WTC11 (cell line): ENCODE measurements at regions of chr18 and their contacts with region 1.

Region 1: DNA sequence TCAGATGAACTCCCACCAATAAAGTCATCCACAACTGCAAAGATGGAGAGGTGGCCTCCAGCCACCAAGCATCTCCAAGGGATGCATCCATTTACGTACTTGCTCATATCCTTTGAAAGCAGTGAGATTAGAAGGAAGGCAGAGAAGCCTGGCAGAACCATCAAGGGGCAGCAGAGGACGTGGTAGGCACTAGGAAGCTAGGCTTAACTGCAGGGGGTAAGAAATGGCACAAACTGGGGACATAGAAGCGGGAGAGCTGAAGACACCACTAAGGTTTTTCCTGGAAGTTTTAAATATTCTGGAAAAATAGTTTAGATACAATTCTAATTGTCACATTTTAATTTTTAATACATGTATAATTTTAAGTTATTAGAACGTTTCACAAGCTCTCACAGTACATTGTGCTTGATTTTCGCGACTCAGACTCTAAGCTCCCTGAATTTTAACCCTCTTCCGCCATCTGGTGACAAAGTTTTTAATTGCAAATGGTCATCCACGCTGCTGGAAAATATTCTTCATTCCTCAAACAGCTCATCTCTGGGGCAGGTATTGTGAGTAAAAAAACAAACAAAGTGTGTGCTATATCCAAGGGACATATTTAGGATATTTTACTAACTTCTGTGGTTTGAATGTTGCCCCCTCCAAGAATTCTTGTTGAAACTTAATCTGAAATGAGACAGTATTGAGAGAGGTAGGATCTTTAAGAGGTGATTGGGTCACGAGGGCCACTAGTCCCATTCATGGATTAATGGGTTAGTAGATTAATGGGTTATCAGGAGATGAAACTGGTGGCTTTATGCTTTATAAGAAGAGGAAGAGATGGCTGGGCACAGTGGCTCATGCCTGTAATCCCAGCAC is 1.6 kb upstream of the PSTPIP2 start:
- DNase-seq: peak; percentile 36
- ATAC-seq: peak; percentile 27
- H3K4me3 Mint-ChIP-seq: peak overlapping the region; percentile 46; the same call in 1 of the 2 replicates
- H3K27ac Mint-ChIP-seq: no peak overlapping the region
- H3K4me1 Mint-ChIP-seq: peaks cover 7% of the 10 kb centered on the region; the same call in 1 of the 2 replicates
- H3K27me3 Mint-ChIP-seq: peaks cover 37% of the 10 kb centered on the region
- CTCF ChIP-seq: peak; percentile 32; the same call in 1 of the 2 replicates

Region 2: DNA sequence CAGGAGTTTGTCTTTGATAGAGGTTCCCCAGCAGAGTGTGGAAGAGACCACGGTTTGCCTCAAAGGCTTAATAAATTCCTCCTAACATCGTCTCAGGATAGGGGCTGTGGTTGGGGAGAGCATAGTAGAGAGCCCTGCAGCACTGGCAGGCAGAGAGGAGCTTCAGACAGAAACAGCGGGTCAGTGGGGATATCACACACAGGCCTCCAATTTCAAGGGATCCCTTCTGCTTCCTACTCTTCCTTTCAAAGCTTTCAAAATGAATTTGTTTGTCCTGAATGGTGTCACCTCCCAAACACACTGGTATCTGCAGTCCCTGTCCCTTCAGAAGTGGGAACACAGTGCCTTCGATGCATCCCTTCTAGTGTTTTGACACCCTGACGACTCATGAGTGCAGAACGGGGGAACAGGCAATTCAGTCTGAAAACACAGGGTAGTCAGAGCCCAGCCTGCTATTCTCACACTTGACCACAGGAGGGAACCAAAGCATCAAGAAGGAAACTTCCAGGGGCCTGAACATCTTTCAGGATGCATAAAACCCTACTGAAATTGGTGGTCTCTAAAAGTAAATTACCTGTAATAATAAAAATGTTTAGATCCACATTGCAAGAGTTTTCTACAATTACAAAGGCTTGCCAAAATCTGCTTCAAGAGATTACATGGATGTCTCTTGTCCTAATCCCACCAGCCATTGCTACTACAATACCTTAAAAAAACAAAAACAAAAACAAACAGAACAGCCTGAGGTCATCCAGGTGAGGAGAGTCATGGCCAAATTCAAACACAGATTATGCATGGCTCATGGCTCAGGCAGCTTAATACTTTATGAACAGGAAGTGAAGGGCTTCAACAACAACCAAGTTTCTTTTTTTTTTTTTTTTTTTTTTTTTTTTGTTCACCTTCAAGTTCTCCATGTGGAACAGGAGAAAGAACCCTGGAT is 408.6 kb before region 1 on chr18:
- CTCF ChIA-PET with region 1: interaction called, 28 read pairs
- POLR2A ChIA-PET with region 1: no interaction called
- DNase-seq: peak; percentile 70
- ATAC-seq: peak; percentile 75
- H3K4me3 Mint-ChIP-seq: no peak overlapping the region
- H3K27ac Mint-ChIP-seq: no peak overlapping the region
- H3K4me1 Mint-ChIP-seq: peaks cover 32% of the 10 kb centered on the region
- H3K27me3 Mint-ChIP-seq: 0 out of 2 replicates have a peak, but pooled peaks cover 2% of the 10 kb centered on the region
- CTCF ChIP-seq: peak; percentile 84

Region 3: GRCh38 chr18:45910405-45911023 is 163.2 kb before region 1 on chr18:
- CTCF ChIA-PET with region 1: interaction called, 16 read pairs
- POLR2A ChIA-PET with region 1: no interaction called
- DNase-seq: peak; percentile 80
- ATAC-seq: peak; percentile 96
- H3K4me3 Mint-ChIP-seq: no peak overlapping the region
- H3K27ac Mint-ChIP-seq: no peak overlapping the region
- H3K4me1 Mint-ChIP-seq: no peaks in the 10 kb centered on the region
- H3K27me3 Mint-ChIP-seq: no peaks in the 10 kb centered on the region
- CTCF ChIP-seq: peak; percentile 65

Region 4: DNA sequence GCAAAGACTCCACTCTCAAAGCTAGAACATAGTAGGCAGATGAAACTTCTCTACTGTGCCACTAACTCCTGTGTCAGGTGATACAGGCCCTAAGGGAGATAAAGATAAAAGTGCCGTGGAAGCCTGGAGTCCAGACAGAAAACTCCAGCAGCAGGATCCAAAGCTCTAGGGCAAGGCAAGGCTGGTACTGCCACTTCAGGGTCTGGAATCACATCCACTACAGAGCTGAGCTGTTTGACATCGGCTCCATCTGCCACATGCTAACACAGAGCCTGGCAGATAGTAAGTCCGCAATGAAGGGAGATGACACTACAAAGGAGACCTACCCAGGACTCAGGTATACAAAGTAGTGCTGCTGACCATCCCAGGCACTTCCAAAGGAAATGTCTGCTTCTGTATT is 141.0 kb before region 1 on chr18:
- CTCF ChIA-PET with region 1: interaction called, 10 read pairs
- POLR2A ChIA-PET with region 1: no interaction called
- DNase-seq: no peak
- ATAC-seq: no peak
- H3K4me3 Mint-ChIP-seq: no peak overlapping the region
- H3K27ac Mint-ChIP-seq: no peak overlapping the region
- H3K4me1 Mint-ChIP-seq: no peaks in the 10 kb centered on the region
- H3K27me3 Mint-ChIP-seq: no peaks in the 10 kb centered on the region
- CTCF ChIP-seq: no peak

Region 5: GRCh38 chr18:45981821-45982220 is 91.9 kb before region 1 on chr18:
- CTCF ChIA-PET with region 1: interaction called, 34 read pairs
- POLR2A ChIA-PET with region 1: no interaction called
- DNase-seq: no peak
- ATAC-seq: no peak
- H3K4me3 Mint-ChIP-seq: no peak overlapping the region
- H3K27ac Mint-ChIP-seq: no peak overlapping the region
- H3K4me1 Mint-ChIP-seq: peaks cover 16% of the 10 kb centered on the region
- H3K27me3 Mint-ChIP-seq: no peaks in the 10 kb centered on the region; the same call in 1 of the 2 replicates
- CTCF ChIP-seq: no peak

Region 6: GRCh38 chr18:46028536-46028891 is 45.2 kb before region 1 on chr18:
- CTCF ChIA-PET with region 1: no interaction called
- POLR2A ChIA-PET with region 1: no interaction called
- DNase-seq: no peak
- ATAC-seq: no peak
- H3K4me3 Mint-ChIP-seq: peak overlapping the region; percentile 64
- H3K27ac Mint-ChIP-seq: no peak overlapping the region
- H3K4me1 Mint-ChIP-seq: peaks cover 6% of the 10 kb centered on the region
- H3K27me3 Mint-ChIP-seq: peaks cover 67% of the 10 kb centered on the region
- CTCF ChIP-seq: no peak

Region 7: DNA sequence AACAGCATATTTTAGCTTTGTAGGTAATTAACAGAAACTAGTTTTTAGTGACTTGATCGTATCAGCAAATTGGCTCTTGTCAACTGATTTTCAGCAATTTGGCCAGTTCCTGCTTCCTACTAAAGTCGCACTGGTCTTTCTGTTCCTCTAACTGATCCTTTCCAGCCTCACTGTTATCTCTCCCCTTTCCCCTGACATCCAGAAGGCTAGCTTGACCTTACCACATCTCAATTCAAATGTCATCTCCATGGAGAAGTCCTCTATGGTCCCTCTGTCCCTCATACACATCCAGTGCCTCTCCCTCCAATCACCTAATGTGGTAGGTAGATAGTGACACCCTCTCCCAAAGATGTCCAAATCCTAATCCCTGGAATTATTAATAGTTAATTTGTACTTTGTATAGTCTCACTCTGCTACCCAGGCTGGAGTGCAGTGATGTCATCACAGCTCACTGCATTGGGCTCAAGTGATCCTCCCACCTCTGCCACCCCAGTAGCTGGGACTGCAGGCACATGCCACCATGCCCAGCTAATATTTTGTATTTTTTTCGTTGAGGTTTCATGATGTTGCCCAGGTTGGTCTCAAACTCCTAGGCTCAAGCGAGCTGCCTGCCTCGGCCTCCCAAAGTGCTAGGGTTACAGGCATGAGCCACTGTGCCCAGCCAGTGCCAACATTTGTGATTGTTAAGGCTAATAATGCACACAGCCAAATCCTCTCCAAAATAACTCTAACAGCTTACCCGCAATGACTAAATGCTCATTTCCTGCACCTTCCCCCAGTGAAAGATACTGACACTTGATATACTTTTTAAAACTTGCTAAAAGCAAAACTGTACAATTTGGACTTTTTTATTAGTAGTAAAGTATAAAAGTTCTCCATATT is 18.5 kb before region 1 on chr18:
- CTCF ChIA-PET with region 1: interaction called, 12 read pairs
- POLR2A ChIA-PET with region 1: no interaction called
- DNase-seq: no peak
- ATAC-seq: no peak
- H3K4me3 Mint-ChIP-seq: no peak overlapping the region
- H3K27ac Mint-ChIP-seq: no peak overlapping the region
- H3K4me1 Mint-ChIP-seq: no peaks in the 10 kb centered on the region
- H3K27me3 Mint-ChIP-seq: no peaks in the 10 kb centered on the region
- CTCF ChIP-seq: no peak

Region 8: GRCh38 chr18:46084431-46084830 is 10.7 kb after region 1 on chr18:
- CTCF ChIA-PET with region 1: interaction called, 15 read pairs
- POLR2A ChIA-PET with region 1: no interaction called
- DNase-seq: no peak
- ATAC-seq: no peak
- H3K4me3 Mint-ChIP-seq: no peak overlapping the region
- H3K27ac Mint-ChIP-seq: no peak overlapping the region
- H3K4me1 Mint-ChIP-seq: no peaks in the 10 kb centered on the region
- H3K27me3 Mint-ChIP-seq: no peaks in the 10 kb centered on the region
- CTCF ChIP-seq: no peak